ENCODE measurements at regions of chr20 and their contacts with region 1.

Region 1: GRCh38 chr20:34190679-34191090 is 50.5 kb upstream of the ASIP start:
- DNase-seq: peak; percentile 82
- H3K4me3 ChIP-seq: no peak overlapping the region
- H3K27ac ChIP-seq: no peak overlapping the region
- H3K4me1 ChIP-seq: no peaks in the 10 kb centered on the region
- H3K27me3 ChIP-seq: peaks cover 37 to 44% of the 10 kb centered on the region in 2 experiments
- CTCF ChIP-seq: peak; percentile 86 to 88
- POLR2A ChIP-seq: no peak

Region 2: DNA sequence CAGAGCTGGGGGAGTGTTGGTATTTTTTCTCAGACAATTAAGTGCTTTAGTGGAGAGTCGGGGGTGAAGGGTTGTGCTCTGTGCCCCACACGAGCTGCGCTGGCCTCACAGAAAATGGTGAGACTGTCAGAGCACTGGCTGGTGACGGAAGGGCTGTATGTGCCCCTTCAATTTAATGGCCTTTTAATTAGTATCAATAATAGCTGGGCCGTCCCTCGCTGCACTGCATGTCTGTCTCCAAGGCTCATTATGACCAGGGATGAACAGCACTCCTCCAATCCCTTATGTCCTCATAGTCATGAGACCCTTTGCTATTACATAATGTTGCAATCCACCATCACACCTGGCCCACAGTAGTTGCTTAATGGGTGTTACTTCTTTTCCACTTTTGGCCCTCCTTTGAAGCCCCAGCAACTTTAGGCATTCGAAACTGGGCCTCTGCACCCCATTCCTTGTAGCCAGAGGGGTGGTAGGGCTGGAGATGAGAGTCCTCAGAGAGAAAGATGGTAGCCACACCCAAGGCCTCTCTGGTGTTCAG is 206.4 kb before region 1 on chr20:
- CTCF ChIA-PET with region 1: no interaction called
- POLR2A ChIA-PET with region 1: no interaction called
- dilution Hi-C with region 1: no loop called
- intact Hi-C with region 1: no loop called
- DNase-seq: no peak
- H3K4me3 ChIP-seq: no peak overlapping the region
- H3K27ac ChIP-seq: no peak overlapping the region
- H3K4me1 ChIP-seq: no peaks in the 10 kb centered on the region
- H3K27me3 ChIP-seq: peaks cover 9% of the 10 kb centered on the region in 2 experiments
- CTCF ChIP-seq: no peak
- POLR2A ChIP-seq: no peak

Region 3: GRCh38 chr20:34143951-34144350 is 46.7 kb before region 1 on chr20:
- CTCF ChIA-PET with region 1: no interaction called
- POLR2A ChIA-PET with region 1: no interaction called
- dilution Hi-C with region 1: no loop called
- intact Hi-C with region 1: no loop called
- DNase-seq: peak; percentile 24
- H3K4me3 ChIP-seq: no peak overlapping the region
- H3K27ac ChIP-seq: no peak overlapping the region
- H3K4me1 ChIP-seq: no peaks in the 10 kb centered on the region
- H3K27me3 ChIP-seq: peaks cover 0 to 1% of the 10 kb centered on the region in 2 experiments
- CTCF ChIP-seq: no peak
- POLR2A ChIP-seq: no peak

Region 4: DNA sequence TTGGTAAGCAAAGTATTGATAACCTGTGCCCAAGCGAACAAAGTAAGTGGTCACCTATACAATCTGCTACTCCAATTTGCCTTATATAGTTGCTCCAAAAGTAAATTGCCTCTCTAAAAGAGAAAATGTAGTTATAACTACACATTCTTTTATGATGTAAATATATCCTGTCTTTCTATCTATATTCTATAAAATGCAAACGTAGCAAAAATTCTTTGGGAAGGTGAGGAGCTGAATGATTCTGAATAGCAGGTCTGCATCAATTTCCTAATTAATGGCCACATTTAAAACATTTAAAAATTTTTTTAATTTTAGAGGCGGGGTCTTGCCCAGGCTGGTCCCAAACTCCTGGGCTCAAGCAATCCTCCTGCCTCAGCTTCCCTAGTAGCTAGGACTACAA is 13.6 kb before region 1 on chr20:
- CTCF ChIA-PET with region 1: interaction called, 12 read pairs
- POLR2A ChIA-PET with region 1: no interaction called
- dilution Hi-C with region 1: no loop called
- intact Hi-C with region 1: no loop called
- DNase-seq: no peak
- H3K4me3 ChIP-seq: no peak overlapping the region
- H3K27ac ChIP-seq: no peak overlapping the region
- H3K4me1 ChIP-seq: no peaks in the 10 kb centered on the region
- H3K27me3 ChIP-seq: peaks cover 4 to 36% of the 10 kb centered on the region in 2 experiments
- CTCF ChIP-seq: no peak
- POLR2A ChIP-seq: no peak

Region 5: DNA sequence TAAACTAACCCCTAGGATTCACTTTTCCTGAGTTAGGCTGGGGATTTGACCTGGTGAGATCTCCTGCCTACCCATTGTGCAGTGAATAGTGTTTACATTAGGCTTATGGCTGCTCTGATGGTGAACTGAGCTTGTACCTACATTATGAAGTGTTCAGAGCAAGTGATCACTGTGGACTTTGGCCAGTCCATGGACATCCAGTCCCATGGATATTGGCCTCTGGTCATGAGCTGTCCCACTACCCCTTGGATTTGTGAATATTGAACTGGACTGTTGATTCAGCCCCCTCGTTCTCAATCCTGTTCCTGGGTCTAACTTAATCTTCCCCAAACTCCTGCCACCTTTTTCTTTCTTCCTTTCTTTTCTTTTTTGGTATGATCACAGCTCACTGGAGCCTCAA is 64.3 kb after region 1 on chr20:
- CTCF ChIA-PET with region 1: interaction called, 26 read pairs
- POLR2A ChIA-PET with region 1: no interaction called
- dilution Hi-C with region 1: no loop called
- intact Hi-C with region 1: loop called (anchors 1 kb)
- DNase-seq: no peak
- H3K4me3 ChIP-seq: no peak overlapping the region
- H3K27ac ChIP-seq: no peak overlapping the region
- H3K4me1 ChIP-seq: no peaks in the 10 kb centered on the region
- H3K27me3 ChIP-seq: peaks cover 0 to 4% of the 10 kb centered on the region in 2 experiments
- CTCF ChIP-seq: no peak
- POLR2A ChIP-seq: no peak

Region 6: GRCh38 chr20:34295284-34295683 is 104.6 kb after region 1 on chr20:
- CTCF ChIA-PET with region 1: interaction called, 18 read pairs
- POLR2A ChIA-PET with region 1: no interaction called
- dilution Hi-C with region 1: no loop called
- intact Hi-C with region 1: no loop called
- DNase-seq: no peak
- H3K4me3 ChIP-seq: no peak overlapping the region
- H3K27ac ChIP-seq: no peak overlapping the region
- H3K4me1 ChIP-seq: no peaks in the 10 kb centered on the region
- H3K27me3 ChIP-seq: no peaks in the 10 kb centered on the region
- CTCF ChIP-seq: no peak
- POLR2A ChIP-seq: no peak

Region 7: GRCh38 chr20:34522969-34523871 is 332.5 kb after region 1 on chr20:
- CTCF ChIA-PET with region 1: interaction called, 25 read pairs
- POLR2A ChIA-PET with region 1: no interaction called
- dilution Hi-C with region 1: no loop called
- intact Hi-C with region 1: loop called (anchors 5 kb)
- DNase-seq: peak; percentile 61
- H3K4me3 ChIP-seq: no peak overlapping the region
- H3K27ac ChIP-seq: no peak overlapping the region
- H3K4me1 ChIP-seq: peaks cover 21% of the 10 kb centered on the region
- H3K27me3 ChIP-seq: no peaks in the 10 kb centered on the region
- CTCF ChIP-seq: peak; percentile 57 to 85
- POLR2A ChIP-seq: no peak

Measured in endothelial cell of umbilical vein (primary cell).